Breast epithelium (tissue), 4 donors: ENCODE measurements at regions of chr12 and their contacts with region 1.

Region 1: DNA sequence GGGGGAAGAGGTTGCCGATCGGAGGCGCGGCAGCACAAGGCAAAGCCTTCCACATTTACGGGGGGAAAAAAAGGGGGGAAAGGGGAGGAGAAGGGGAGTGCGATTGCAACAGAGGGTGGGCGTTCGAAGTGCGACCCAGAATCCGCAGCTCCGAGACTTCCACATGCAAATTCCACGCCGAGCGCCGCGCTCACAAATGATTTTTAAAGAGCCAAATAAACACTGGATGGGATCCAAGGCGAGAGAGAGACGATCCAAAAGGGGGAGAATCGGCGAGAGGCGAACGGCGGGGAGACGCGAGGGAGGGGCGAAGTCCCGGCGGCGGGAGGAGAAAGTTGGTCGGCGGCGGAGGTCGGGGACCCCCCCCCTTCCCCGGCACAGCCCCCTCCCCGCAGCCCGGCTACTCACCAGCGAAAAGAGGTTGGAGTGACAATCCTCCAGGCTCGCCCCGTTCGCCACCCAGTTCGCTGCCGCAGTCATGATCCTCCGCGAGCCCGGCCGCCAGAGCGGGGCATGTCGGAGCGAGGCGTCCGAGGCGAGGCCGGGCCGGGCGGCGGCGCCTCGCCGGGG is 756 bp downstream of the MED13L start:
- DNase-seq: peak; percentile 69 to 84
- H3K4me3 ChIP-seq: peak overlapping the region; percentile 70 to 98 (median 74)
- H3K27ac ChIP-seq: peak overlapping the region; percentile 97 to 100
- H3K4me1 ChIP-seq: peaks cover 0 to 6% of the 10 kb centered on the region in 2 donors
- H3K27me3 ChIP-seq: no peaks in the 10 kb centered on the region
- CTCF ChIP-seq: no peak
- POLR2A ChIP-seq: no peak

Region 2: DNA sequence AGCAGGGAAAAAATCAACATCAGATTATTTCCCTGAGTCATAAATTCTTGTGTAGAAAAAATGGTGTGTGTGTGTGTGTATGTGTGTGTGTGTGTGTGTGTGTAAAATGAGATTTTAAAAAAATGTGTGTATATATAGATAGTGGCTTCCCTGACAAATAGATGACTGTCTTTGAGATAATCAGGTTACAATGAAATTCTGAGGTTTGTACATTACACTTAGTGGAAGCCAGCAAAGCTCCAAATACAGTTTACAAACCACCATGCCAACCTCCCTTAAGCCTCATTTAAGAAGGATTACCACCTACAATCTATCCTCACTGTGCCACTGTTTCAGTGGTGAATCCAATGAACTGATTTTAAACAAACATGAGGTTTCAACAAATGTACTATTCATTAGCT is 93.0 kb before region 1 on chr12:
- intact Hi-C with region 1: no loop called
- DNase-seq: no peak
- H3K4me3 ChIP-seq: no peak overlapping the region
- H3K27ac ChIP-seq: no peak overlapping the region
- H3K4me1 ChIP-seq: peaks cover 0 to 8% of the 10 kb centered on the region in 2 donors
- H3K27me3 ChIP-seq: no peaks in the 10 kb centered on the region
- CTCF ChIP-seq: no peak
- POLR2A ChIP-seq: no peak

Region 3: DNA sequence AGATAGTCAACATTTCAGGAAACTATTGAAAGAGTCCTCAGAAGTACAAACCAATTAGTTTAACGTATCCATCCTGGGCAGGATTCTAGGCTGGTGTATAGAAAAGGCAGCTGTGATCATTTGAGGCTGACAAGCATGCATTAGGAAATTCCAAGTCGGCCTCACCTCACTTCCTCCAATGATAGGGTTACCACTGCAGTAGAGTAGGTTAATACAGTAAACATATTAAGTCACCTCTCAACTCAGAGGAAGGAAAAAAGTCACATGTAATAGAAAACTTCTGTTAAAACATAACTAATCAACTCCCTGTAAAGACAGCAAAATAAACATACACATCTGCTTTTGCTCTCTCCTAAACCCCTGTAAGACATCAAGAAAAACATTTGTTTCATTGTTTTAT is 32.7 kb before region 1 on chr12:
- intact Hi-C with region 1: no loop called
- DNase-seq: no peak
- H3K4me3 ChIP-seq: no peak overlapping the region
- H3K27ac ChIP-seq: peak overlapping the region in 1 of 2 donors; percentile 46
- H3K4me1 ChIP-seq: peaks cover 0 to 8% of the 10 kb centered on the region in 2 donors
- H3K27me3 ChIP-seq: no peaks in the 10 kb centered on the region
- CTCF ChIP-seq: no peak
- POLR2A ChIP-seq: no peak

Region 4: GRCh38 chr12:116325336-116325664 is 48.6 kb after region 1 on chr12:
- intact Hi-C with region 1: loop called (anchors 2 kb)
- DNase-seq: no peak
- H3K4me3 ChIP-seq: no peak overlapping the region
- H3K27ac ChIP-seq: peak overlapping the region in 1 of 2 donors; percentile 58
- H3K4me1 ChIP-seq: peaks cover 0 to 7% of the 10 kb centered on the region in 2 donors
- H3K27me3 ChIP-seq: no peaks in the 10 kb centered on the region
- CTCF ChIP-seq: no peak
- POLR2A ChIP-seq: no peak